GM13977 (cell line): ENCODE measurements at regions of chr6 and their contacts with region 1.

Region 1: DNA sequence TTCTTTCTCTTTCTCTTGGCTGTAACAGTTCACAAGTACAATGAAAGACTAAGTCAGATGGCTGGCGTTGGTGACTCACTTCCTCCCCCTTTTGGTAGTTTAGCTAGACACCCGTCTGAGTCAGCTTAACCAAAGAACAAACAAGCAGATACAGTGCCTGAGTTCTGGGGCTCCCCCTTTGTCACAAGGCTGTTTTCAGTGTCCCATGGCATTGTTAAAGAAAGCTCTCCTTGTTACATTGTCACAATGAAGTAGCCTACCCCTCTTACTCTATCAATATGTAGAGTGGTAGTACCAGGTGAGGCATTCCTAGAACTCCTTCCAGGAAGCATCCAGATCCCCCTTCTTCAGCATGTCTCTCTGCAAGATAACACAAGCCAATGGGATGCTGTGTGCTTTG is 38.6 kb downstream of the KIAA0408 start:
- DNase-seq: peak; percentile 83
- CTCF ChIP-seq: peak; percentile 73

Region 2: GRCh38 chr6:127291495-127291894 is 129.1 kb before region 1 on chr6:
- in situ Hi-C with region 1: loop called (anchors 25 kb)
- DNase-seq: peak; percentile 14
- CTCF ChIP-seq: no peak